Lower leg skin (tissue), 4 donors: ENCODE measurements at regions of chr12 and their contacts with region 1.

Region 1: DNA sequence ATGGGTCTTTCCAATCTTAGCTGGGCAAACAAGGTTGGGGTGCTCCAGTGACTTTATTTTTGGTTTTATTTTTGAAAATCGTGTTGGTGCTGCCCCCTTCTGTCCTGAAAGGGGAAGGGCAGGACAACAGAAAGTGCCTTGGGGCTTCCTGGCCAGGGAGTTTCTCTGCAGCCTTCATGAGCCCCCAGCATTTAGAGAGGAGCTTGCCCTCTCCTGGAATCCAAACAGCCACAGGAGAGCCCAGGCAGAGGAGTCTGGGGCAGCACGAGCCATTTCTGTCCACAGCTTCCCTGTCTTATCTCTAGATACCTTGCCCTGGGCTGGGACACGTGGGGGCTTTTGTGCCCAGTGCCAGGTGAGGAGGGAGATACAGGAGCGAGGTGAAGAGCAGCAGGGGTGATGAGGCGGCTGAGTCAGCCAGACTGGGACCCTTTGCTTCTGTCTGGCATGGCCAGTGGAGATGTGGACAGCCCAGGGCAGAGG is 4.4 kb upstream of the C1RL start:
- DNase-seq: no peak
- H3K4me3 ChIP-seq: no peak overlapping the region
- CTCF ChIP-seq: peak in 1 of 3 donors; percentile 41
- POLR2A ChIP-seq: no peak

Region 2: GRCh38 chr12:6927379-6928024 is 185.9 kb before region 1 on chr12 and contains the start of gene ATN1:
- intact Hi-C with region 1: loop called (anchors 10 kb)
- DNase-seq: peak in 1 of 2 donors; percentile 96
- H3K4me3 ChIP-seq: peak within 1 kb of the TSS; percentile 86
- CTCF ChIP-seq: no peak
- POLR2A ChIP-seq: no peak
- total RNA-seq, gene ATN1: 33.4 to 115 (median 64.0) TPM

Region 3: DNA sequence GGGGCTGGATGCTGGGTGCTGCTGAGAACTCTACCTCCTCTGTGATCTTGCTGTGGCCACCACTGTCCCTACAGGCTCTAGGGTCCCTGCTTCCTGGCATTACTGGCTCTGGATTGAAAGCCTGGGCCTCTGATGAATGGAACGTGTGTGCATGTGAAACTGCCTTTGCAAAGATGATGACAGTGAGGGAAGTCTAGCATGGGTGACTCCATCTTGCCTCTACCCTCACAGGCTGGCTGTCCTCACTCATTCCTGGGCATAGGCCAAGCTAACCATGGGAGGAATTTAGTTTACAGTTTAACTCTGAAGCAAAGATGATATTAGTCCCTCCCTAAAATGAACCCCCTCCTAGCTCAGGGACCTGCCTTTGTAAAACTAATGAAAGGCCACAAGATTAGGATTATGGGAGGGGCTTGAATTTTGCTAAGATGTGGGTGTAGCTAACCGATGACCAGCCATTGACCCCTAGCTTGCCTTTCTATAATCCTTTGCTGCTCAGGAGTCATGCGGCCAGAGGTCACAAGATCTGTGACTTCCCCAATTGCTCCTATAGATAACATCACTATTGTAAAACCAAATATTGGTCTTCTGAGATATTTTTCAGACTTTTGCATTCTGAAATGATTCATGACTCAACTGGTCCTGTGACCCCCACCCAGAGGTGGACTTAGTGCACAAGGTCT is 55.1 kb before region 1 on chr12:
- intact Hi-C with region 1: loop called (anchors 10 kb)
- DNase-seq: peak in 1 of 2 donors; percentile 63
- H3K4me3 ChIP-seq: no peak overlapping the region
- CTCF ChIP-seq: no peak
- POLR2A ChIP-seq: no peak

Region 4: DNA sequence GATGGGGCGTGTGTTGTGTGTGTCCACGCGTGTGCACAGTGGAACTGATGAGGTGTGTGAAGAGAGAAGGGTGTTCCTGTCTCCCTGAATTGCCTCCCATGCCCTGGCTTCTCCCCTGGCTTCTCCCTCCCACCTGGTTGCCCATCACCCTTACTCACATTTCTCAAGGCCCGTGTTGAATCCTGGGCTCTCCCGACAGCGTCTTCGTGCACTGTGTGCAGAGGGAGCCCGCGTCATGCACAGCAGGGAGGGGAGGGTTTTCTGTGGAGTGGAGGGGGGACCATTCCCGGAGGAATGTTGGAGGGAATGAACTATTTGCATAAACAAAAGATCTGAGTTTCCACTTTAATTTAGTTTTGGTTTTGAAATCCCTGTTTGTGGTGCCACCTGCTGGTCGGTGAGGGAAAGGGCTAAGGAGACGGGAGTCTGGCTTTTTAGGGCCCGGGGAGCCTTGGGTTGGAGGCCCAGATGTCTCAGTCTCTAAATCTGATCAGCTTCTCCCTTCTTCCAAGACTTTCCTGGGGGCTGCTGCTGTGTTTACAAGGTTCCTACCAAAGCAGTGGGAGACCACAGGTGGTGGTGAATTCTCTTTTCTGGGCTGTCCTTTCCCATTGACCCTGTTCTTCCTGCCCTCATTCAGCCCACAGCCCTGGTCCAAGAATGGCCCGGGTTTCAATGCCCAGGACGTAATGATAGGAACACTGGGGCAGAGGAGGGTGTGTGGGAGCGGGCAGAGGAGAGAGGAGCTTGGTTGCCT is 21.0 kb before region 1 on chr12 and contains the start of gene C1R:
- intact Hi-C with region 1: no loop called
- DNase-seq: peak; percentile 76 to 94
- H3K4me3 ChIP-seq: peak within 1 kb of the TSS; percentile 29
- CTCF ChIP-seq: peak in 1 of 3 donors; percentile 40
- POLR2A ChIP-seq: no peak
- total RNA-seq, gene C1R: 65.0 to 259 (median 84.7) TPM

Region 5: GRCh38 chr12:7175493-7175892 is 62.1 kb after region 1 on chr12:
- intact Hi-C with region 1: no loop called
- DNase-seq: no peak
- H3K4me3 ChIP-seq: no peak overlapping the region
- CTCF ChIP-seq: no peak
- POLR2A ChIP-seq: no peak